B cell (primary cell): ENCODE measurements at regions of chr11 and their contacts with region 1.

Region 1: GRCh38 chr11:128290106-128290840 is 297.1 kb downstream of the ETS1 start:
- DNase-seq: peak; percentile 91
- ATAC-seq: peak; percentile 71
- H3K4me3 ChIP-seq: peak overlapping the region in 4 of 5 experiments; percentile 33 to 48 (median 48)
- H3K4me3 Mint-ChIP-seq: peak overlapping the region; percentile 78
- H3K27ac ChIP-seq: peak overlapping the region; percentile 94 to 95
- H3K27ac Mint-ChIP-seq: peak overlapping the region; percentile 99
- H3K4me1 ChIP-seq: peaks cover 73 to 74% of the 10 kb centered on the region in 2 donors
- H3K4me1 Mint-ChIP-seq: peaks cover 95% of the 10 kb centered on the region
- H3K27me3 ChIP-seq: no peaks in the 10 kb centered on the region
- H3K27me3 Mint-ChIP-seq: no peaks in the 10 kb centered on the region
- CTCF ChIP-seq: peak; percentile 90

Region 2: DNA sequence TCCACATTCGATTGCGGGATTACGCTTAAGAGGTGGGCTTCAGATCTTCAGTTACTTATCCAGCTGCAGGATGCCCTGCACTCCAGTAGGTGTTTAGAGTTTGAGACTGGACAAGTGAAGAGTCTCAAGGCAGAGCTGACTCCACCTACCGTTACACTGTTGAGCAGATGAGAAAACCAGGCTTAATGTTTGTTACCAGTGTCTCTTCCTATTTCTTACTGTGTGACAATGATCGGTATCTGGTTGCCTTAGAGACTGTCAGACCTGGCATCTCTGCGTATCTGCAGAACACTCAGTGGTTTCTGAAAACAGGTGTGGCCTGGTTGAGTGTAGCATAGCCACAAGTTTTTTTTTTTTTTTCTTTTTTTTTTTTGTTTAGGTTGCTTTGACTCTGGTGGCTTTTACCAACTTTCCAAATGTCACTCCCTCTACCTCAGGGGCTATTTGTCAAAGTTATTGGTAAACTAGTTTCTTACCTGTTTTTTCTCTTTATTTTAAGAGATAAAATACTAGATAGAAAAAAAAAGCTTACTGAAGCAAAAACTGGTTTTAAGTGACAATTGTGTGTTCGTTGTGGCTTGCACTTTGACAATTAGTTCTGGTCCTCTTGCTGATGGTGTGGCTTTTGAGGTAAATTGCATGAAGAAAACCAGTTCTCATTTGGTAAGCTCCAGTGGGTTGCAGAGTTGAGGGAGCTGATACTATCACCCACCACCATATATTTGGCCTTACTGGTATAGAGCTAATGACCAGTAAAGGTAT is 12.3 kb after region 1 on chr11:
- CTCF ChIA-PET with region 1: interaction called, 32 read pairs
- POLR2A ChIA-PET with region 1: interaction called, 4 read pairs
- intact Hi-C with region 1: loop called (anchors 1 kb)
- DNase-seq: peak; percentile 82
- ATAC-seq: peak; percentile 90
- H3K4me3 ChIP-seq: no peak overlapping the region
- H3K4me3 Mint-ChIP-seq: peak overlapping the region; percentile 44
- H3K27ac ChIP-seq: peak overlapping the region; percentile 67 to 85
- H3K27ac Mint-ChIP-seq: peak overlapping the region; percentile 88
- H3K4me1 ChIP-seq: peaks cover 75 to 76% of the 10 kb centered on the region in 2 donors
- H3K4me1 Mint-ChIP-seq: peaks cover 77% of the 10 kb centered on the region
- H3K27me3 ChIP-seq: no peaks in the 10 kb centered on the region
- H3K27me3 Mint-ChIP-seq: no peaks in the 10 kb centered on the region
- CTCF ChIP-seq: no peak

Region 3: GRCh38 chr11:128399251-128400121 is 109.2 kb after region 1 on chr11:
- CTCF ChIA-PET with region 1: interaction called, 10 read pairs
- POLR2A ChIA-PET with region 1: no interaction called
- intact Hi-C with region 1: loop called (anchors 5 kb)
- DNase-seq: no peak
- ATAC-seq: peak; percentile 80
- H3K4me3 ChIP-seq: no peak overlapping the region
- H3K4me3 Mint-ChIP-seq: no peak overlapping the region
- H3K27ac ChIP-seq: peak overlapping the region; percentile 61 to 76
- H3K27ac Mint-ChIP-seq: peak overlapping the region; percentile 43
- H3K4me1 ChIP-seq: peaks cover 25% of the 10 kb centered on the region in 2 donors
- H3K4me1 Mint-ChIP-seq: peaks cover 36% of the 10 kb centered on the region
- H3K27me3 ChIP-seq: no peaks in the 10 kb centered on the region
- H3K27me3 Mint-ChIP-seq: no peaks in the 10 kb centered on the region
- CTCF ChIP-seq: no peak

Region 4: GRCh38 chr11:128506999-128507611 is 216.8 kb after region 1 on chr11:
- CTCF ChIA-PET with region 1: interaction called, 20 read pairs
- POLR2A ChIA-PET with region 1: no interaction called
- intact Hi-C with region 1: no loop called
- DNase-seq: peak; percentile 39
- ATAC-seq: peak; percentile 54
- H3K4me3 ChIP-seq: peak overlapping the region in 4 of 5 experiments; percentile 8 to 41 (median 30)
- H3K4me3 Mint-ChIP-seq: peak overlapping the region; percentile 82
- H3K27ac ChIP-seq: peak overlapping the region; percentile 25 to 82
- H3K27ac Mint-ChIP-seq: peak overlapping the region; percentile 86
- H3K4me1 ChIP-seq: peaks cover 100% of the 10 kb centered on the region in 2 donors
- H3K4me1 Mint-ChIP-seq: peaks cover 98% of the 10 kb centered on the region
- H3K27me3 ChIP-seq: no peaks in the 10 kb centered on the region
- H3K27me3 Mint-ChIP-seq: no peaks in the 10 kb centered on the region
- CTCF ChIP-seq: no peak

Region 5: GRCh38 chr11:128603752-128604414 is 313.6 kb after region 1 on chr11:
- CTCF ChIA-PET with region 1: interaction called, 57 read pairs
- POLR2A ChIA-PET with region 1: interaction called, 4 read pairs
- intact Hi-C with region 1: no loop called
- DNase-seq: peak; percentile 63
- ATAC-seq: peak; percentile 69
- H3K4me3 ChIP-seq: no peak overlapping the region
- H3K4me3 Mint-ChIP-seq: peak overlapping the region; percentile 35
- H3K27ac ChIP-seq: peak overlapping the region in 1 of 2 donors; percentile 10
- H3K27ac Mint-ChIP-seq: peak overlapping the region; percentile 72
- H3K4me1 ChIP-seq: peaks cover 55 to 59% of the 10 kb centered on the region in 2 donors
- H3K4me1 Mint-ChIP-seq: peaks cover 72% of the 10 kb centered on the region
- H3K27me3 ChIP-seq: no peaks in the 10 kb centered on the region
- H3K27me3 Mint-ChIP-seq: no peaks in the 10 kb centered on the region
- CTCF ChIP-seq: no peak

Region 6: GRCh38 chr11:128695539-128696221 is 405.4 kb after region 1 on chr11:
- CTCF ChIA-PET with region 1: no interaction called
- POLR2A ChIA-PET with region 1: interaction called, 3 read pairs
- intact Hi-C with region 1: loop called (anchors 2 kb)
- DNase-seq: peak; percentile 81
- ATAC-seq: peak; percentile 53
- H3K4me3 ChIP-seq: peak overlapping the region; percentile 62 to 100 (median 94)
- H3K4me3 Mint-ChIP-seq: peak overlapping the region; percentile 94
- H3K27ac ChIP-seq: peak overlapping the region; percentile 61 to 92
- H3K27ac Mint-ChIP-seq: peak overlapping the region; percentile 95
- H3K4me1 ChIP-seq: peaks cover 55 to 62% of the 10 kb centered on the region in 2 donors
- H3K4me1 Mint-ChIP-seq: peaks cover 62% of the 10 kb centered on the region
- H3K27me3 ChIP-seq: peaks cover 0 to 12% (median 4%) of the 10 kb centered on the region in 4 experiments
- H3K27me3 Mint-ChIP-seq: no peaks in the 10 kb centered on the region
- CTCF ChIP-seq: no peak